Esophagus muscularis mucosa (tissue), 4 donors: ENCODE measurements at regions of chrX and their contacts with region 1.

Region 1: DNA sequence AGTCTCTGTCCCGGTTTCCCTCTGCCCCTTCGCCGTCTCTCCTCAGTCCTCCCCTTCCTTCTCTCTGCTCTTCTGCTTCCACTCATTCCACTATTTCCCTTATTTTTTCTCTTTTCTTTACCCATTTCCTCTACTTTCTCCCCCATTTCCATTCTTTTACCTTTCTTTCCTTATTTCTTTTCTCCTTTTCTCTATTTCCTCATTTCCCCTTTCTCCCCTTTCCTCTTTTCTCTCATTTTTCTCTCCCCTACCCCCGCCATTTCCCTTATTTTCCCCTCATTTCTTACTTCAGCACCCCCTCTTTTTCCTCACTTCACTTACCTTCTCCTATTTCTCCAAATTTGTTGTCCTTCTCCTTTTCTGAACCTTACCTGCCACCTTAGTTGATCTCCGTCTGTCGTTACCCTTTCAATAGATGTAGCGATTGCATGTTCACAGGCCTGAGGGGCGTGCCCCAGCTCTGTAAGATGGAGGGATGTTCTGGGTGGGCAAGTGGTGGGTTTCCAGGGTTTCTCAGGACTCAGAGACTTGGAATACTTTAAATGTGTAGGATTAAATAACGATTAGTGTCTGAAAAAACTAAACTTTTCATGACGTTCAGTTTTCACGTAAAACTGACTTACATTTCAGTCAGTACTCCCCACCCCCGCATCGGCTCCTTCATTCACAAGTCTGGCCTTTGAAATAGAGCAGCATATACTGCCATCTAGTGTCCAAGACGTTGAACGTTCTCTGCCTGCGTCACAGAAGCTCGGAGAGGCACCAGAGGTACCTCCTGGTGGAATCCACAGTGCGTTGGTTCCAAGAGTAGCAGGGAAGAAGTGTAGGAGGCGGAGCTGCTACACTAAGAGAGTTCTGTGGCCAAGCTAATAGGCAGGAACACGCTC is 641 bp upstream of the NCBP2L start:
- DNase-seq: peak; percentile 93
- H3K4me3 ChIP-seq: peak overlapping the region; percentile 62 to 76 (median 66)
- H3K27ac ChIP-seq: peak overlapping the region; percentile 84 to 92 (median 88)
- H3K4me1 ChIP-seq: peaks cover 4 to 44% (median 38%) of the 10 kb centered on the region in 4 donors
- H3K27me3 ChIP-seq: peaks cover 0 to 4% (median 0%) of the 10 kb centered on the region in 4 donors
- CTCF ChIP-seq: peak; percentile 69 to 84 (median 70)
- EP300 ChIP-seq: no peak
- POLR2A ChIP-seq: no peak

Region 2: GRCh38 chrX:106481341-106481740 is 1295.6 kb before region 1 on chrX:
- intact Hi-C with region 1: loop called (anchors 10 kb)
- DNase-seq: no peak
- H3K4me3 ChIP-seq: no peak overlapping the region
- H3K27ac ChIP-seq: no peak overlapping the region
- H3K4me1 ChIP-seq: no peaks in the 10 kb centered on the region
- H3K27me3 ChIP-seq: no peaks in the 10 kb centered on the region
- CTCF ChIP-seq: peak; percentile 67 to 81 (median 70)
- EP300 ChIP-seq: no peak
- POLR2A ChIP-seq: no peak

Region 3: GRCh38 chrX:107662145-107662544 is 114.7 kb before region 1 on chrX:
- intact Hi-C with region 1: loop called (anchors 2 kb)
- DNase-seq: no peak
- H3K4me3 ChIP-seq: no peak overlapping the region
- H3K27ac ChIP-seq: peak overlapping the region in 1 of 4 donors; percentile 14
- H3K4me1 ChIP-seq: peaks cover 0 to 13% (median 2%) of the 10 kb centered on the region in 4 donors
- H3K27me3 ChIP-seq: no peaks in the 10 kb centered on the region
- CTCF ChIP-seq: no peak
- EP300 ChIP-seq: no peak
- POLR2A ChIP-seq: no peak

Region 4: GRCh38 chrX:107716816-107717700 is 59.8 kb before region 1 on chrX:
- intact Hi-C with region 1: loop called (anchors 2 kb)
- DNase-seq: peak; percentile 97
- H3K4me3 ChIP-seq: peak overlapping the region; percentile 71 to 87 (median 73)
- H3K27ac ChIP-seq: peak overlapping the region; percentile 94 to 97 (median 96)
- H3K4me1 ChIP-seq: peaks cover 8 to 60% (median 55%) of the 10 kb centered on the region in 4 donors
- H3K27me3 ChIP-seq: no peaks in the 10 kb centered on the region
- CTCF ChIP-seq: peak in 1 of 3 experiments; percentile 8
- EP300 ChIP-seq: peak; percentile 85
- POLR2A ChIP-seq: peak; percentile 95

Region 5: DNA sequence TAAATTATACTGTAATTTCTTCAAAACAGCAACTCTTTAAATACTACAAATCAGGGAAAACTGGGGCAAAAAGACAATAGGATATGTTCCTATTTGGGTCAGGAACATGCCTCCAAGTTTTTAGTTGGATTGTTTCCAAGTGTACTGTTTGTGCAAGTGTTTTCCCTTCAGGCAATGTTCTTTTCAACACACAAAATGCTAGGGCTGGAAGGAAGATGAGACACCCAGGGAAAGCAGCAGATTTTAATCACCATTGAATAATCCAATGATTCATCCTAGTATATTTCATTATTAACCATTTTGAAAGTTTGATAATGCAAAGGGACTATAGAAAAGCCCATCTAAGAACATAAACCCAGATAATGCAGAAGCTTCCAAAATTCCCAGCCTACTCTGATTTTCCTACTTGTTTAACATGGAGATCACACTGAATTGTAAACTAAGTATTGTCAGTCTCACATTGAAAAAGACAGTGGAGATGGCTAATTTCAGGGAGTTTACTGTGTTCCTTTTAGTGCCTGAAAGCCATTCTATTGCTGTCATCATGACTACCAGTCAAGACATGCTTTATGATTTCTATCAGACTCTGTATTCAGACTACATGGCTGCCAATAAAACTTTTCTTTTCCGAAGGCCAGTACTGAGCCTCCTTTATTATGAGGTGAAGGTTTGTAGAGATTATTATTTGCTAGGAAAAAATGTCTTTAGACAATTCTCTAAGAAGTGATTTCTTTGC is 622.7 kb after region 1 on chrX:
- intact Hi-C with region 1: no loop called
- DNase-seq: no peak
- H3K4me3 ChIP-seq: no peak overlapping the region
- H3K27ac ChIP-seq: peak overlapping the region; percentile 10 to 30 (median 28)
- H3K4me1 ChIP-seq: peaks cover 0 to 32% (median 9%) of the 10 kb centered on the region in 4 donors
- H3K27me3 ChIP-seq: no peaks in the 10 kb centered on the region
- CTCF ChIP-seq: no peak
- EP300 ChIP-seq: no peak
- POLR2A ChIP-seq: no peak